A549 (cell line): ENCODE measurements at regions of chr11 and their contacts with region 1.

Region 1: GRCh38 chr11:119474682-119475596 is 52.0 kb upstream of the THY1 start:
- DNase-seq: peak; percentile 42 to 62
- ATAC-seq: peak; percentile 70 to 90; a peak in 5 of 6 replicates
- H3K4me3 ChIP-seq: no peak overlapping the region
- H3K27ac ChIP-seq: peak overlapping the region in 1 of 2 experiments; percentile 64; a peak in 1 of 6 replicates
- H3K4me1 ChIP-seq: 0 out of 3 replicates have a peak, but pooled peaks cover 3% of the 10 kb centered on the region
- CTCF ChIP-seq: peak; percentile 74
- EP300 ChIP-seq: no peak
- POLR2A ChIP-seq: no peak
- RAD21 ChIP-seq: peak; percentile 84 to 88

Region 2: GRCh38 chr11:119339589-119340343 is 135.2 kb before region 1 on chr11:
- CTCF ChIA-PET with region 1: interaction called, 13 read pairs
- POLR2A ChIA-PET with region 1: no interaction called
- DNase-seq: no peak
- ATAC-seq: peak; percentile 64 to 76
- H3K4me3 ChIP-seq: peak overlapping the region; percentile 33
- H3K27ac ChIP-seq: peak overlapping the region; percentile 48 to 90; a peak in 5 of 6 replicates
- H3K4me1 ChIP-seq: peaks cover 19% of the 10 kb centered on the region
- CTCF ChIP-seq: peak; percentile 81
- EP300 ChIP-seq: no peak
- POLR2A ChIP-seq: no peak
- RAD21 ChIP-seq: peak; percentile 29 to 39; a peak in 3 of 5 replicates

Region 3: GRCh38 chr11:119363851-119364590 is 110.9 kb before region 1 on chr11:
- CTCF ChIA-PET with region 1: interaction called, 22 read pairs
- POLR2A ChIA-PET with region 1: no interaction called
- DNase-seq: peak in 1 of 2 experiments; percentile 31
- ATAC-seq: peak in 1 of 2 experiments; percentile 49; a peak in 3 of 6 replicates
- H3K4me3 ChIP-seq: peak overlapping the region; percentile 50
- H3K27ac ChIP-seq: peak overlapping the region; percentile 74 to 91
- H3K4me1 ChIP-seq: peaks cover 73% of the 10 kb centered on the region
- CTCF ChIP-seq: no peak
- EP300 ChIP-seq: no peak
- POLR2A ChIP-seq: no peak
- RAD21 ChIP-seq: no peak

Region 4: GRCh38 chr11:119381181-119381988 is 93.6 kb before region 1 on chr11 and contains the start of gene USP2:
- CTCF ChIA-PET with region 1: interaction called, 70 read pairs
- POLR2A ChIA-PET with region 1: interaction called, 4 read pairs
- DNase-seq: peak; percentile 81 to 92
- ATAC-seq: peak; percentile 97 to 98
- H3K4me3 ChIP-seq: peak within 1 kb of the TSS; percentile 55
- H3K27ac ChIP-seq: peak within 1 kb of the TSS; percentile 43 to 69; a peak in 3 of 6 replicates
- H3K4me1 ChIP-seq: peaks cover 4% of the 10 kb centered on the region; the same call in 1 of the 3 replicates
- CTCF ChIP-seq: peak; percentile 70
- EP300 ChIP-seq: no peak
- POLR2A ChIP-seq: no peak
- RAD21 ChIP-seq: peak; percentile 36 to 61; a peak in 4 of 5 replicates
- polyA plus RNA-seq, gene USP2: 0.30 and 0.37 TPM in 2 replicates

Region 5: GRCh38 chr11:119501777-119502405 is 27.0 kb after region 1 on chr11:
- CTCF ChIA-PET with region 1: no interaction called
- POLR2A ChIA-PET with region 1: no interaction called
- DNase-seq: no peak
- ATAC-seq: no peak
- H3K4me3 ChIP-seq: no peak overlapping the region
- H3K27ac ChIP-seq: no peak overlapping the region
- H3K4me1 ChIP-seq: no peaks in the 10 kb centered on the region
- CTCF ChIP-seq: no peak
- EP300 ChIP-seq: no peak
- POLR2A ChIP-seq: no peak
- RAD21 ChIP-seq: no peak

Region 6: GRCh38 chr11:119533921-119534736 is 59.2 kb after region 1 on chr11:
- CTCF ChIA-PET with region 1: interaction called, 14 read pairs
- POLR2A ChIA-PET with region 1: no interaction called
- DNase-seq: peak; percentile 53 to 64
- ATAC-seq: peak; percentile 95 to 98
- H3K4me3 ChIP-seq: no peak overlapping the region
- H3K27ac ChIP-seq: no peak overlapping the region
- H3K4me1 ChIP-seq: no peaks in the 10 kb centered on the region
- CTCF ChIP-seq: peak; percentile 88
- EP300 ChIP-seq: no peak
- POLR2A ChIP-seq: no peak
- RAD21 ChIP-seq: peak; percentile 57 to 65